T-cell (primary cell): ENCODE measurements at regions of chr15 and their contacts with region 1.

Region 1: GRCh38 chr15:29019796-29020084 is 134.0 kb downstream of the APBA2 start:
- DNase-seq: no peak
- ATAC-seq: no peak
- H3K4me3 ChIP-seq: no peak overlapping the region
- H3K4me3 Mint-ChIP-seq: no peak overlapping the region
- H3K27ac ChIP-seq: no peak overlapping the region
- H3K27ac Mint-ChIP-seq: peak overlapping the region in 1 of 2 donors; percentile 24
- H3K4me1 ChIP-seq: peaks cover 0 to 7% of the 10 kb centered on the region in 2 experiments
- H3K4me1 Mint-ChIP-seq: peaks cover 44 to 50% (median 47%) of the 10 kb centered on the region in 3 donors
- H3K27me3 ChIP-seq: no peaks in the 10 kb centered on the region
- H3K27me3 Mint-ChIP-seq: no peaks in the 10 kb centered on the region

Region 2: DNA sequence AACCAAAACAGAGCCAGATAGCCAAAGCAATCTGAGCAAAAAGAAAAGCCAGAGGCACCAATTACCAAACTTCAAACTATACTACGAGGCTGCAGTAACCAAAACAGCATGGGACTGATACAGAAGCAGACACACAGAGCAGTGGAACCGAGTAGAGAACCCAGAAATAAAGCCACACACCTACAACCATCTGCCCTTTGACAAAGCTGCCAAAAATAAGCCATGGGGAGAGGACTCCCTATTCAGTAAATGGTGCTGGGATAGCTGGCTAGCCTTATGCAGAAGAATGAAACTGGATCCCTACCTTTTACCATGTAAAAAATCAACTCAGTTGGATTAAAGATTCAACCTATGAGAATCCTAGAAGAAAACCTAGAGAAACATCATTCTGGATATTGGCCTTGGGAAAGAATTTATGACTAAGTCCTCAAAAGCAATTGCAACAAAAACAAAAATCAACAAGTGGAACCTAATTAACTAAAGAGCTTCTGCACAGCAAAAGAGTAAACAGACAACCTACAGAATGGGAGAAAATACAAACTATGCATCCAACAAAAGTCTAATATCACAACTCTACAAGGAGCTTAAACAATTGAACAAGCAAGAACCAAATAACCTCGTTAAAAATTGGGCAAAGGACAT is 38.9 kb before region 1 on chr15:
- CTCF ChIA-PET with region 1: no interaction called
- POLR2A ChIA-PET with region 1: interaction called in 1 of 2 experiments, 10 read pairs
- DNase-seq: no peak
- ATAC-seq: no peak
- H3K4me3 ChIP-seq: no peak overlapping the region
- H3K4me3 Mint-ChIP-seq: no peak overlapping the region
- H3K27ac ChIP-seq: no peak overlapping the region
- H3K27ac Mint-ChIP-seq: no peak overlapping the region
- H3K4me1 ChIP-seq: peaks cover 5 to 37% of the 10 kb centered on the region in 2 experiments
- H3K4me1 Mint-ChIP-seq: peaks cover 36 to 52% (median 43%) of the 10 kb centered on the region in 3 donors
- H3K27me3 ChIP-seq: no peaks in the 10 kb centered on the region
- H3K27me3 Mint-ChIP-seq: no peaks in the 10 kb centered on the region

Region 3: GRCh38 chr15:29086001-29086400 is 66.3 kb after region 1 on chr15:
- CTCF ChIA-PET with region 1: no interaction called
- POLR2A ChIA-PET with region 1: no interaction called
- DNase-seq: no peak
- ATAC-seq: no peak
- H3K4me3 ChIP-seq: no peak overlapping the region
- H3K4me3 Mint-ChIP-seq: no peak overlapping the region
- H3K27ac ChIP-seq: no peak overlapping the region
- H3K27ac Mint-ChIP-seq: peak overlapping the region in 1 of 2 donors; percentile 55
- H3K4me1 ChIP-seq: peaks cover 0 to 37% of the 10 kb centered on the region in 2 experiments
- H3K4me1 Mint-ChIP-seq: peaks cover 36 to 48% (median 42%) of the 10 kb centered on the region in 3 donors
- H3K27me3 ChIP-seq: no peaks in the 10 kb centered on the region
- H3K27me3 Mint-ChIP-seq: no peaks in the 10 kb centered on the region